A549 (cell line): ENCODE measurements at regions of chr2 and their contacts with region 1.

Region 1: GRCh38 chr2:25951071-25951547 is 31.2 kb downstream of the KIF3C start:
- DNase-seq: peak; percentile 95 to 97
- ATAC-seq: peak; percentile 92 to 95
- H3K4me3 ChIP-seq: peak overlapping the region; percentile 15; the same call in 2 of the 3 replicates
- H3K27ac ChIP-seq: peak overlapping the region; percentile 60 to 77
- H3K4me1 ChIP-seq: peaks cover 27% of the 10 kb centered on the region
- CTCF ChIP-seq: peak; percentile 99
- EP300 ChIP-seq: no peak
- POLR2A ChIP-seq: no peak
- RAD21 ChIP-seq: peak; percentile 100

Region 2: DNA sequence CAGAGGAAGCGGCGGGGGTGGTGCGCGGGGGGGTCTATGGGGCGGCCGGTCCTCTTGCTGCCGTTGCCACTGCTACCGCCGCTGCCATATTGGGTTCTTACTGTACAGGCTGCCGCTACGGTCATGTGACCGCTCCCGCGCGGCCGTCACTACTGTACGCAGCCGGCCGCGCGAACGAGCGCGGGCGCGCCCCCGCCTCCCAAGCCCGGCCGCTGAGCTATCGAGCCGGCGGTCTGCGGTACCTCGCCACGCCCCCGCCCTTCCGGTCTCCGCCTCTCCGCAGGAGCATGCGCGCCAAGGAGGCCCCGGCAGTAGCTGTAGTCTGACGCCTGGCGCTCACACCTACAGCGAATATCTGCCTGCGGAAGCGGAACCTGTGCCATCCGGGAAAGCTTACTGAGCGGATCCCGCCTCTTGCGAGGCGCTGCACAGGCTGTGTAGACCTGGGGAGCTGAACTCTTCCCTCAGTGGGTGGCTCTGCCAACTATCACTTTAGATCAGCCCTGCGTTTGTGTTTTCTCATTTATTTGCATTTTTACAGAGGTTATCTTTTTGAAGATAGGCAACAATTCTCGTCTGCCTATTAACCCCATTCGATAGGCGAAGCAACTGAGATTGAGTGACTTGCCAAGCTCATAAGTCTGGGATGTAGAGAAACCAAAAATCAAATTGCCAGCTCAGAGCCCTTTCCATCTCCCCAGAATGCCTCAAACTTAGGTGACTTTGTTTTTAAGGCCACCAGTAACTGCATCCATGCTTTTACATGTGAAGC is 72.6 kb before region 1 on chr2 and contains the start of gene ASXL2:
- CTCF ChIA-PET with region 1: interaction called, 10 read pairs
- POLR2A ChIA-PET with region 1: interaction called, 9 read pairs
- DNase-seq: peak; percentile 92 to 99
- ATAC-seq: peak; percentile 93
- H3K4me3 ChIP-seq: peak within 1 kb of the TSS; percentile 67
- H3K27ac ChIP-seq: peak within 1 kb of the TSS; percentile 94
- H3K4me1 ChIP-seq: peaks cover 23% of the 10 kb centered on the region
- CTCF ChIP-seq: no peak
- EP300 ChIP-seq: no peak
- POLR2A ChIP-seq: peak; percentile 88
- RAD21 ChIP-seq: no peak
- polyA plus RNA-seq, gene ASXL2: 26.4 and 26.6 TPM in 2 replicates

Region 3: DNA sequence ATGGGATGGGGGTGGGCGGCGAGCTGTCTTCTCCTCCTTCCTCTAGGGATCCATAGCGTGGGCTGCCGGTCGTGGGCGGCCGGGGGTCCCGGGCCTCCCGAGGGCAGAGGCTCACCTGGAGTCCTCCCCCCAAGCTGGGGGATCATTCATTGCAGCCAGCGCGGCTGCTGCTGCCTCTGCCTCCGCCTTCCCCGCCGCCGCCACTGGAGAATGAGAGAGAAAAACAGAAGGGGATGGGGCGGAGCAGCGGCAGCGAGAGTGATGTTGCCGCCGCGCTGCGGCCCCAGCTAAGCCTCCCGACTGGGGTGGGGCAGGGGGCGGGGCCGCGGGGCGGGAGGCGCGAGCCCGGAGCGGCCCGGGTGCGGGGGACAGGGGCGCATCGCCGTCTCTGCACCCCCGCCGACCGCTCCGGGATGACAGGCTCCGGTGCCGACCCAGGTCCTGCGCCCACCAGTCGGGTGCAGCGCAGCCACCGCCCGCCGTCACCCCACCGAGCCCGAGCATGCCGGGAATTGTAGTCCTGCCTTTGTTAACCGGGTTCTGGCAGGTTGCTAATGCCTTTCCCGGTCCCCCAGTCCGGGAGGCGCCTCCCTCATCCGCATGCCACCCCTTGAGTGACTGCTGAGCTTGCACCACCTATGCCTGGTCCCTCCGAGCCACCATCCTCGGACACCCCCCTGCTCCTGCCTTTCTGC is 31.3 kb after region 1 on chr2 and contains the start of gene KIF3C:
- CTCF ChIA-PET with region 1: interaction called, 96 read pairs
- POLR2A ChIA-PET with region 1: no interaction called
- DNase-seq: peak; percentile 75 to 82
- ATAC-seq: peak; percentile 79
- H3K4me3 ChIP-seq: peak within 1 kb of the TSS; percentile 79
- H3K27ac ChIP-seq: peak within 1 kb of the TSS; percentile 81 to 90
- H3K4me1 ChIP-seq: peaks cover 50% of the 10 kb centered on the region
- CTCF ChIP-seq: no peak
- EP300 ChIP-seq: no peak
- POLR2A ChIP-seq: no peak; the same call in 1 of the 2 replicates
- RAD21 ChIP-seq: no peak; a peak in 1 of 5 replicates
- polyA plus RNA-seq, gene KIF3C: 17.1 and 20.1 TPM in 2 replicates

Region 4: GRCh38 chr2:26018176-26018716 is 67.1 kb after region 1 on chr2:
- CTCF ChIA-PET with region 1: interaction called, 10 read pairs
- POLR2A ChIA-PET with region 1: no interaction called
- DNase-seq: peak; percentile 95
- ATAC-seq: peak; percentile 98 to 99
- H3K4me3 ChIP-seq: no peak overlapping the region
- H3K27ac ChIP-seq: peak overlapping the region; percentile 73 to 93
- H3K4me1 ChIP-seq: peaks cover 73% of the 10 kb centered on the region
- CTCF ChIP-seq: no peak
- EP300 ChIP-seq: peak; percentile 41 to 44; a peak in 2 of 5 replicates
- POLR2A ChIP-seq: no peak
- RAD21 ChIP-seq: peak in 1 of 2 experiments; percentile 21; a peak in 2 of 5 replicates

Region 5: GRCh38 chr2:26139269-26140183 is 188.4 kb after region 1 on chr2:
- CTCF ChIA-PET with region 1: interaction called, 280 read pairs
- POLR2A ChIA-PET with region 1: no interaction called
- DNase-seq: peak in 1 of 2 experiments; percentile 44
- ATAC-seq: peak; percentile 28 to 42
- H3K4me3 ChIP-seq: no peak overlapping the region
- H3K27ac ChIP-seq: no peak overlapping the region; a peak in 1 of 6 replicates
- H3K4me1 ChIP-seq: peaks cover 14% of the 10 kb centered on the region
- CTCF ChIP-seq: no peak
- EP300 ChIP-seq: no peak
- POLR2A ChIP-seq: no peak
- RAD21 ChIP-seq: no peak

Region 6: DNA sequence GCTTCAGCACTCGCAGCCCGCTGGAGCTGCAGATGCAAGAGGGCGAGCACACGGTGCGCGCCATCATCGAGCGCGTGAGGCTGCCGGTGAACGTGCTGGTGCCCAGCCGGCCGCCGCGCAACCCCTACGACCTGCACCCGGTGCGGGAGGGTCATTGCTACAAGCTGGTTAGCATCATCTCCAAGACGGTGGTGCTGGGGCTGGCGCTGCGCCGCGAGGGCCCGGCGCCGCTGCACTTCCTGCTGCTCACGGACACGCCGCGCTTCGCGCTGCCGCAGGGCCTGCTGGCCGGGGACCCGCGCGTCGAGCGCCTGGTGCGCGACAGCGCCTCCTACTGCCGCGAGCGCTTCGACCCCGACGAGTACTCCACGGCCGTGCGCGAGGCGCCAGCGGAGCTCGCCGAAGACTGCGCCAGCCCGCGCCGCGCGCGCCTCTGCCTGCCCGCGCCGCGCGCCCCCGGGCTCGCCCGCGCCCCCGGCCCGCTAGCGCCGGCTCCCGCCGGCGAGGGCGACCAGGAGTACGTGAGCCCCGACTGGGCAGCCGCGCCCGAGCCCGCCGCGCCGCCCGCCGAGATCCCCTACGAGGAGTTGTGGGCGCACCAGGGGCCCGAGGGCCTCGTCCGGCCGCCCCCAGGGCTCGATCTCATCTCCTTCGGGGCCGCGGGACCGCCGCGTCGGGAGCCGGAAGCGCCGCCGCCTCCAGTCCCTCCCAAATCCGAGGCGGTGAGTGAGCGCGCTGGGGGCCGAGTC is 233.6 kb after region 1 on chr2:
- CTCF ChIA-PET with region 1: interaction called, 28 read pairs
- POLR2A ChIA-PET with region 1: no interaction called
- DNase-seq: peak; percentile 86 to 94
- ATAC-seq: peak; percentile 77 to 85
- H3K4me3 ChIP-seq: peak overlapping the region; percentile 64
- H3K27ac ChIP-seq: peak overlapping the region; percentile 84 to 93
- H3K4me1 ChIP-seq: peaks cover 7% of the 10 kb centered on the region; the same call in 2 of the 3 replicates
- CTCF ChIP-seq: peak; percentile 95
- EP300 ChIP-seq: no peak
- POLR2A ChIP-seq: peak; percentile 33
- RAD21 ChIP-seq: peak; percentile 47 to 62; a peak in 3 of 5 replicates

Region 7: GRCh38 chr2:26195040-26195984 is 244.2 kb after region 1 on chr2:
- CTCF ChIA-PET with region 1: no interaction called
- POLR2A ChIA-PET with region 1: no interaction called
- DNase-seq: no peak
- ATAC-seq: no peak
- H3K4me3 ChIP-seq: no peak overlapping the region
- H3K27ac ChIP-seq: no peak overlapping the region
- H3K4me1 ChIP-seq: no peaks in the 10 kb centered on the region
- CTCF ChIP-seq: no peak
- EP300 ChIP-seq: no peak
- POLR2A ChIP-seq: no peak
- RAD21 ChIP-seq: no peak